ENCODE measurements at regions of chr17 and their contacts with region 1.

Region 1: DNA sequence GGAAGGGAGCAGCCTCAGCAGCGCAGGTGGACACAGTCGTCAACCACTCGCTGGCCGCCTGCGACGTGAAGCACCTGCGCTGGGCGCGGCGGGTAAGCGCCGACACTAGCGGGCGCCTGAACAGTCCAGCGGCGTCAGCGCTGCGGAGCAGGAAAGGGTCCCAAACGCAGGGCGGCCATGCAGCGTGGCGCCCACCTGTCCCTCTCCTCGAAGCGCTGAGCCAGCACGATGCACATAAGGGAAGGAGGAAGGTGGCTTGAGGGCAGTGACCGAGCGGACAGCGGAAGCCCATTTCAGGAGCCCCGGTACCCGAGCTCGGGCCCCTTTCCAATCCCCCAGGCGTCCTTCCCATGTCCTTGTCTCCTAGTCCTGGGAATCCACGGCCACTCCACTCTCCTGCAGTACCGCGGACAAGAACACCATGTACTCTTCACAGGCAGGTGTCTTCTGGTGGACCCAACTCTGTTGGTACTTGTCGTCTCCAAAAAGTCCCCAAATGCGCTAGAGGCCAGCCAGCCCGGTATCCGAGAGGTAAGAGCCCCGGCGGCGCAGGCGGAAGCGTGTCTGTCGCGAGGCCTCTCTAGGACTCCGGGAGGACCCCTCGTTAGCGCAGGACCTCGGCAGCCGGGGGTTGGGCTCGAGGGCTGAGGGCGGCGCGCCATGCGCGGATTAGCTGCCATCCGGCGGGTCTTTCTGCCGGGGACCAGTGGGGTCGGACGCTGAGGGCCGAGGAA is 14.4 kb downstream of the ZNF232 start:
- DNase-seq: peak; percentile 60
- ATAC-seq: peak; percentile 93
- H3K4me3 Mint-ChIP-seq: peak overlapping the region; percentile 94
- H3K27ac Mint-ChIP-seq: peak overlapping the region; percentile 91
- H3K4me1 Mint-ChIP-seq: peaks cover 12% of the 10 kb centered on the region
- H3K27me3 Mint-ChIP-seq: no peaks in the 10 kb centered on the region
- CTCF ChIP-seq: no peak

Region 2: DNA sequence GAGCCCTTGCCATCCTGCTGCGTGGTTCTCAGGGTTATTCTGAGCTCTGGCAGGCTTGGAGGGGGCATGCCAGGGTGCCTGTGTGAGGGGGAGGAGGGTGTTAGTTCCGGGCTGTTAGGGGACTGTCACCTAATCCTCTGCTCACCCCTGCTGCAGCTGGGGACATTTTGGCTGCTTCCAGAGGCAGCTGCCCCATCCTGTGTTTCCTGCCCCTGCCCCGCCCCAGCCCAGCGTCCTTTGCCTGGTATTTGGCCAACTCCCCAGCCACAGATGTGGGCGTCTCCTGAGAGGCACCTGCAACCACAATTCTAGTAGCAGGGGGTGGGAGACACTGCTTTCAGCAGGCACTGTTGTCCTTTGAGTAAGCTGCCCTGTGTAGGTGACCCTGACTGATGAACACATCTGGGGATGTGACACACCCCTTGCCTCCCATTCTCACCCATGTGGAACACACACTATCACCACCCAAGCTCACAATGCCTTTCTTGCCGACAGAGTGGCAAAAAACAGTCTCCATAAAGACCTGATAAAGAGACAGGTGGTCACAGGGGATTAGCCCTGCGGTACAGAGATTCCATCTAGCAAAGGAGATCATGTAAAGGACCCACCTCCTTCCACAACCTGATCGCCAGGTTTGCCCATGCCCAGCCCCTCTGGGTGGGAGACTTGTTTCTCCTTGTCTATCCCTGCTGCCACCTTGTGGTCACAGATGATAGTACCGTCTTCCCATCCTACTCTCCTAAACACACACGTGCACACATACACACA is 194.0 kb before region 1 on chr17 and contains the start of gene CHRNE:
- CTCF ChIA-PET with region 1: no interaction called
- POLR2A ChIA-PET with region 1: no interaction called
- intact Hi-C with region 1: no loop called
- DNase-seq: peak; percentile 49
- ATAC-seq: peak; percentile 41
- H3K4me3 Mint-ChIP-seq: peak within 1 kb of the TSS; percentile 49
- H3K27ac Mint-ChIP-seq: peak within 1 kb of the TSS; percentile 73
- H3K4me1 Mint-ChIP-seq: peaks cover 44% of the 10 kb centered on the region
- H3K27me3 Mint-ChIP-seq: peaks cover 2% of the 10 kb centered on the region
- CTCF ChIP-seq: no peak
- total RNA-seq, gene CHRNE: 0.38 and 0.66 TPM in 2 replicates

Region 3: DNA sequence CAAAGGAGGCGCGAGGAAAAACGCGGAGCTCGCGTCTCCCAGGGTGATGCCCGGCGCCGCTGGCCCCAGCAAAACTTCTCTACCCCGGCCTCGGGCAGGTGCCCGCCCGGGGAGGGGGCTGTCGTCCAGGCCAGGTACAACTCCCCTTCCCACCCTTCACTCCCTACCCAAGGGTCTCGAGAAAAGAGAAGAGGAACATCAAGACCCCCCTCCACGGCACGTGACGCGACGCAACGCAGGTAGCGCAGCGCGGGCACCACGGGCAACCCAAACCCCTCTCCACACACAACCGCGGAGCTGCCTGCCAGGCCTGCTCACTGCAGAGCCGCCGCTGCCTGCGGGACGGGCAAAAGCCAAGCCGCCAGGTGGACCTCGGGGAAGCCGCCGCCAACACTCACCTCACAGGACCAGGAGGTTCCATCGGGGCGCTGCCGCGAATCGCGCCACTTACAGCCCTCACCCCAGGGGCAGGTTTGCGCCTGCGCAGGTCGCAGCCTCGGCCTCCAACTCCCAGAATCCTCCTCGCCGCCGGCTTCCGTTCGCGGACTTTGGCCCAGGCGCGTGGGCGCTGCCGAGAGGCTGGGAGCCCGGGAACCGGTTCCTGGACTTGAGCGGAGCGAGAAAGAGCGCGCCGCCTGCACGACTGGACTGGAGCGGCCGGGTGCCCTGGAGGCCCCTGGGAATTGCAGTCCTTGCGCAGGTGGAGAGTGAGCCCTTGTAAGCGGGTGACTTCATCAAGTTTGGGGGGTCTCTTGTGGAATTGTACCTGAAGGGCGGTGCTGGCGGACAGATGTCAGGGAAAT is 14.3 kb after region 1 on chr17 and contains the start of gene ZNF232:
- CTCF ChIA-PET with region 1: no interaction called
- POLR2A ChIA-PET with region 1: interaction called, 10 read pairs
- intact Hi-C with region 1: loop called (anchors 1 kb)
- DNase-seq: peak; percentile 91
- ATAC-seq: peak; percentile 90
- H3K4me3 Mint-ChIP-seq: peak within 1 kb of the TSS; percentile 85
- H3K27ac Mint-ChIP-seq: peak within 1 kb of the TSS; percentile 79
- H3K4me1 Mint-ChIP-seq: peaks cover 27% of the 10 kb centered on the region
- H3K27me3 Mint-ChIP-seq: peaks cover 11% of the 10 kb centered on the region
- CTCF ChIP-seq: no peak
- total RNA-seq, gene ZNF232: 12.6 and 14.8 TPM in 2 replicates

Measured in activated B cell treated with CpG ODN at 0.5 μM for 24 hours (primary cell).